ENCODE measurements at regions of chr21 and their contacts with region 1.

Region 1: DNA sequence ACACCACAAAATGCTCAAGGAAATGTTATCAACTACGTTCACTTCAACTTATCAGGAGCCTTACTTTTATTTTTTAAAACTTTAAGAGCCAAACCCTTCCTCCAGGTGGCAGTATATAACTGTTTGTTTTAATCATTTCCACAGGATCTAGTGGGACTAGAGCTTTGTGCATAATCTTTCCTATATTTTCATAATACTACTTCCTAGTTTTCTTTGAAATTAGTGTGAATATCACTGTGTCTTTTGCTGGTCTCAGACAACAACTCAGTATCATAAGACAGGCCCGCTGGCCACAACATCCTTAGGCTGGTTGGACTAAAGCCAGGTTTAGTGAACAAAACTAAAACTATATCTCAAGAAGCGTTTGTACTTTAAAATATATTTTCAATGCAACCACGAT is 145.5 kb downstream of the TIAM1 start:
- DNase-seq: no peak

Region 2: GRCh38 chr21:31580866-31581276 is 382.3 kb after region 1 on chr21:
- intact Hi-C with region 1: loop called (anchors 2 kb)
- DNase-seq: no peak

Region 3: DNA sequence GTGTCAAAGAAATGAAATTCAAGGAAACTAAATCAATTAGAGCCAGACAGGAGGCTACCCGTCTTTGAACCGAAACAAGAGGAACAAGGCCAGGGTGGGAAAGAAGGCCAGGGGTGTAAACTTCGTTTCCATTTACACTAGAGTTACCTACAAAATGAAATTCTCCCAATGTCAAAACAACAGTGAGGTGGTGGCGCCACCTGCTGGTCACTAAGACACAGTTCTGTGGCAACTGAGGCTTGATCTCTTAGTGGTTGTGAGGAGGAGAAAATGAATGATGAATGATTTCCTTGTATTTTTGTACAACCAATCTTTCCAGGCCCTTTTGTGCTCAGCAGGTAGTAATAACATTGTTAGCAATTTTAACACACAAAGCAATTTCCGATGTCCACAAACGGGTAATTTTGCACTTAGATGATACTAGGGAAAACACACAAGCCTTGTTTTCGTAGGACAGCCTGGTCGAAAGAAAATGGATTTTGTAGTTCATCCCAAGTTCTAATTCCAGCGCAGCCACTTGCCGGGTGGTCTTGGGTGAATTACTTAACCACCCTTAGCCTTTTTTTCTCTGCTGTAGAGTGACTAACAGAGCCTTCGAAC is 406.1 kb after region 1 on chr21:
- intact Hi-C with region 1: loop called (anchors 5 kb)
- DNase-seq: no peak